ENCODE measurements at regions of chr5 and their contacts with region 1.

Region 1: DNA sequence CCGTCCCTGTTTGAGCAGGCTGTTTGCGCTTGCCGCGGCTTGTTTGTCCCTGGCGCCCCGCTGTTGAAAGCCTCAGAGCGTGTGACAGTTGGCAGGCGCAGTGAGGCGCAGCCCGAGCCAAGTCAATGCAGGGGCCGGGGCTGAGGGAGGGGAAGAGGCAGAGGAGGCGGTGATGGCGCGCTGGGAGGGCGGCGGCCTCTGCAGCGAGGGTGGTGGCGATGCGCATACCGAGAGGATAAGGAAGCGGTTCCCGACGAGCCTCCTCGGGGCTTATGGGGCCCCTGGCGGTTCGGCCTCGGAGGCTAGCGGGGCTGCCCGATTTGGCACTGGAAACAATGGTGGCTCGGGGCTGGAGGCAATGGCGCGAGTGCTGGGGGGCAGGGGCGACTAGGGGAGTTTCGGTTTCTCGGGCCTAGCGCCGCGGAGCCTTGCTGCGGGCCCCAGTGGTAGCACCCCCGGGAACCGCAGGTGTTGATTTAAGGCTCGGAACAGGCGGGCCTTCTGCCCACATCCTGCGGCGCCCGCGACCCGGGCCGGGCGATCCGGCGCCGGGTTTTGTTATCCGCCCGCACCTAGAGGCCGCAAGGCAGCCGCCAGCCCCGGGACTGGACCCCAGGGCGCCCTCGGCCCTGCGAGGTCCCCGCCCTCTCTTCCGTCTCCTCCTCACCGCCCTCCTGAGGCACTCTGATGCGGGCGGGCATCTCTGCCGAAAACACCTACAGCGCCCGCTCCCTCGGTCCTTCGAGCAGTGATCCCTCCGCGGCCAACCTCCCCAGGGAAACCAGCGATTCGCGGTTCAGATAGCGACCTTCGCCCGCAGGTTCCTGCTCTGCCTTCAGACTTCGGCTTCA is 947 bp upstream of the LNPEP start:
- DNase-seq: peak; percentile 97
- ATAC-seq: peak; percentile 69
- H3K4me3 Mint-ChIP-seq: peak overlapping the region; percentile 98
- H3K27ac Mint-ChIP-seq: peak overlapping the region; percentile 98
- H3K4me1 Mint-ChIP-seq: peaks cover 78% of the 10 kb centered on the region
- H3K27me3 Mint-ChIP-seq: no peaks in the 10 kb centered on the region
- CTCF ChIP-seq: no peak

Region 2: DNA sequence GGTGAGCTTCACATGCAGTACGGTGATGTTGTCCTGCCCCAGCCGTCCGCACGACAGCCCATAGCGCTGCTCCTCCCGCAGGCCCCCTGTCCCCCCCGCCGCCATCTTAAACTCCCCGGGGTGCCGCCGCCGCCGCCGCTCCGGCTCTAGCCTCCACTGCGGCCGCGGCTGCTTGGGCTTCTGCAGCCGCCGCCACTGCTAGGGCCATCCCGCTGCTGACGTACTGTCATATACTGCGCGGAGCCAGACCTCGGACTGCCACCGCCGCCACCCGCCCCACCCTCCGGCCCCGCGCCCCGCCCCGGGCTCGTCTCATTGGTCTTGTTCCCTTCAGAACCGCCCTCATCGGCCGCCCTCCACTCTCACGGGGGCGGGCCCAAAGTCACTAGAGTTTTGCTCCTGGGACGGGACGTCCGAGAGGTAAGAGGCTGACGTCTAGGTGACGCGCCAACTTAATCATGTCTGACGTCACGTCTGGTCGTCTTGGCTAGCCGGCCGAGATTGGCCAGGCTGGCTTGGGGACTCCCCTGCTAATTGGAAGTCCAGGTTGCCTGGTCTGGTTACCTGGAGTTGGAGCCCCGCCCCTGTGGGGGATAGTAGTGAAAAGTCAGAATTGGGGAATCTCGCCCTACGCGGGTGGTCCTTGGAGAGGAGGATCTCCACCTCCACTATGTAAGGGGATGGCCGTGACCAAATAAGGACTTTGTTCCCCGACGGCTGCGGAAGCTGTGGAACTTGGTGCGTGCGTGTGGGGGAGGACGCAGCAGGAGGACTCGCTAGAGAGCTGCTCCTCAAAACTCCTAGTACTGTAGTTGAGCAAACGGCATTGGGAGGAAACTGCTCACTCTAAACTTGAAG is 973.1 kb before region 1 on chr5 and contains the start of gene ELL2:
- CTCF ChIA-PET with region 1: no interaction called
- POLR2A ChIA-PET with region 1: no interaction called
- intact Hi-C with region 1: loop called (anchors 1 kb)
- DNase-seq: peak; percentile 92
- ATAC-seq: peak; percentile 84
- H3K4me3 Mint-ChIP-seq: peak within 1 kb of the TSS; percentile 99
- H3K27ac Mint-ChIP-seq: peak within 1 kb of the TSS; percentile 97
- H3K4me1 Mint-ChIP-seq: peaks cover 48% of the 10 kb centered on the region
- H3K27me3 Mint-ChIP-seq: no peaks in the 10 kb centered on the region
- CTCF ChIP-seq: no peak
- total RNA-seq, gene ELL2: 52.9 and 56.0 TPM in 2 replicates

Region 3: DNA sequence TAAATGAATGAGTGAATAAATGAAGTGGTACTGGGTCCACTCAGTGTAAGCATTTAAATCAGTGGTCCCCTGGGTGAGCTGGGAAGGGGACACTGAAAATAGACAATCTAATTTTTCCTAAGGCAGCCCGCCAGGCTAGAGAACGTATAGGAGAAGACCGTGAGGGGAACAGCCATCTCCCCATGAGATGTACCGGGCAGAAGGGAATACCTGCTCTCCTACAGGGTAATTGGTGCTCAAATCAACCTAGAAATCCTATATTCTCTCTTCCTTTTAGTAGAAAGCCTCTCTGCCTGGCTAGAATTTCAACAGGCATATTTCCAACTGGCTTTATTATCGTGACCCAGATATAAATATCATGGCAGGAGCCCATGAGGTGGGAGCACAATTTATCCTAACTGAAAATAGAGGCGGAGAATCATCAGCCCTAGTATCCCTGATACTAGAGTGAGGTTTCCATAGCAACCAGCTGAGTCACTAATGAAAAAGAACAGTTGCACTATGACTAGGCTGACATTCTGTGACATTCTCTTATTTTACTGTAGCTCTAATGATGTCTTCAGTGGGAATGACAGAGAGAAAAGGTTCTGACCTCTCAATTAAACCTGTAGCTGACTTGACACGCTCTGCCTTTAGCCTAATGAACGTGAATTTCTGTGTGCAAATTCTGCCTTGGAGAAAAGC is 369.2 kb before region 1 on chr5:
- CTCF ChIA-PET with region 1: no interaction called
- POLR2A ChIA-PET with region 1: no interaction called
- intact Hi-C with region 1: no loop called
- DNase-seq: no peak
- ATAC-seq: no peak
- H3K4me3 Mint-ChIP-seq: no peak overlapping the region
- H3K27ac Mint-ChIP-seq: no peak overlapping the region
- H3K4me1 Mint-ChIP-seq: peaks cover 8% of the 10 kb centered on the region
- H3K27me3 Mint-ChIP-seq: peaks cover 5% of the 10 kb centered on the region
- CTCF ChIP-seq: no peak

Region 4: DNA sequence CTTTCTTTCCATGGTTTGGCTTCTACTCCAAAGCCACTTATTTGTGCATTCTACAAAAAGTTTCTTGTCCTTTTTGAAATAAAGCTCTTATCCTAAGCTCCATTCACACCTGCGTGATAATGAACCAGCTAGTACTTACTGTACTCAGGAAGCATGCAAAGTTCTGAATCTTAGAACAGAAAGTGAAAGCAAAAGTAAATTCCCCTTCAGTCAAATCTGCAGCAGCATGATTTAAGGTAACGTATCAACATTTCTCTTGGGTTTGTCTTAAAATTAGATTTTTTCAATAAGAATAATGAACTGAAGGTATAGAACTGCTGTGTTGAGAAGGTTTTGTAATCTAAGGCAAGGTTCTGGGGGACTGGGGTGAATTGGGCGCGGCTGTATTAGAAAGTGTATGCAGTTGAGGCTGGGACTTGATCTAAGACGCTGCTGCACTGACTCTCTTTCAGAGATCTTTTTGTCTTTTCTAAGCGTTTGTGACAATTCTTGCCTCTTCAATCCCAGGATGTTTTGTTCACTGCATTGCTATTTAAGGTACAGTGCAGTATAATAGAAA is 58.6 kb before region 1 on chr5 and contains the start of gene ERAP2:
- CTCF ChIA-PET with region 1: interaction called, 35 read pairs
- POLR2A ChIA-PET with region 1: interaction called, 94 read pairs
- intact Hi-C with region 1: no loop called
- DNase-seq: no peak
- ATAC-seq: peak; percentile 53
- H3K4me3 Mint-ChIP-seq: peak within 1 kb of the TSS; percentile 98
- H3K27ac Mint-ChIP-seq: peak within 1 kb of the TSS; percentile 96
- H3K4me1 Mint-ChIP-seq: peaks cover 88% of the 10 kb centered on the region
- H3K27me3 Mint-ChIP-seq: no peaks in the 10 kb centered on the region
- CTCF ChIP-seq: no peak
- total RNA-seq, gene ERAP2: 63.1 and 80.9 TPM in 2 replicates

Region 5: GRCh38 chr5:96919754-96920197 is 15.2 kb before region 1 on chr5:
- CTCF ChIA-PET with region 1: no interaction called
- POLR2A ChIA-PET with region 1: interaction called, 6 read pairs
- intact Hi-C with region 1: loop called (anchors 1 kb)
- DNase-seq: no peak
- ATAC-seq: peak; percentile 65
- H3K4me3 Mint-ChIP-seq: no peak overlapping the region
- H3K27ac Mint-ChIP-seq: peak overlapping the region; percentile 12
- H3K4me1 Mint-ChIP-seq: peaks cover 42% of the 10 kb centered on the region
- H3K27me3 Mint-ChIP-seq: no peaks in the 10 kb centered on the region
- CTCF ChIP-seq: no peak

Region 6: DNA sequence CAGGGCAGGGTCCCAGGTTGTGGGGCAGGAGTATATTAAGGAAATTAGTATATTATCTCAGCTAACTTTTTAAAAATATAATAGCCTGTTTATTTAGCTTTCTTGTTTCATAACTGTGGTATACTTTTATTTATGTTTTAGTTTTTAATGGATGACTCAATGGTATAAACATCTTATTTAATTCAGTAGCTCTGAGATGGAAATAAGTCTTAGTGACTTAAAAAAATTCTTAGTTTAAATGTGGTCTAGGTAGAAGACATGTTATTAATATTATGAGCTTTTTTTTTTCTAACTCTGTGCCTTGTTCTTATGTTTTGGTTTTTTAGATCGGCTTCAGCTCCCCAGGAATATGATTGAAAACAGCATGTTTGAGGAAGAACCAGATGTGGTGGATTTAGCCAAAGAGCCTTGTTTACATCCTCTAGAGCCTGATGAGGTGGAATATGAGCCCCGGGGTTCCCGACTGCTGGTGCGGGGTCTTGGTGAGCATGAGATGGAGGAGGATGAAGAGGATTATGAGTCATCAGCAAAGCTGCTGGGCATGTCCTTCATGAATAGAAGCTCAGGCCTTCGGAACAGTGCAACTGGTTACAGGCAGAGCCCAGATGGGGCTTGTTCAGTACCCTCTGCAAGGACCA is 44.0 kb after region 1 on chr5:
- CTCF ChIA-PET with region 1: no interaction called
- POLR2A ChIA-PET with region 1: interaction called, 3 read pairs
- intact Hi-C with region 1: loop called (anchors 2 kb)
- DNase-seq: no peak
- ATAC-seq: no peak
- H3K4me3 Mint-ChIP-seq: no peak overlapping the region
- H3K27ac Mint-ChIP-seq: peak overlapping the region; percentile 43
- H3K4me1 Mint-ChIP-seq: peaks cover 31% of the 10 kb centered on the region
- H3K27me3 Mint-ChIP-seq: no peaks in the 10 kb centered on the region
- CTCF ChIP-seq: no peak

Region 7: DNA sequence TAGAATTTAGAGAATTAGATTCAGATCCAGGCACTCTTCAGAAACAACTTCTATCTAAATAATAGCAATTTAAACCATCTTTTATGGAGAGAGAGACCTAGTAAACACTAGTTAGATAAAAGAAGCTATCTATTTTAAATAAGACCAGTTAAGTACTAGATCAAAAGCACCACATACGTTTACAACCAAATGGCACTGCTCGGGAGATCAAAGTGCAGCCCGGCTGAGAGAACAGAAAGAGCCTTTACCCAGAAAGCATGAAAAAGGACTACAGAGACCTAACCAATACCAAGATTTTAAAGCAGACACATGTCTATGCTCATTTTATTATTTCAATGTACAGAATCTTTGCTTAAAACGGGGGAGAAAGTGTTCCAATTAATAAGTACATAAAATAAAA is 176.7 kb after region 1 on chr5:
- CTCF ChIA-PET with region 1: no interaction called
- POLR2A ChIA-PET with region 1: no interaction called
- intact Hi-C with region 1: no loop called
- DNase-seq: no peak
- ATAC-seq: no peak
- H3K4me3 Mint-ChIP-seq: no peak overlapping the region
- H3K27ac Mint-ChIP-seq: no peak overlapping the region
- H3K4me1 Mint-ChIP-seq: no peaks in the 10 kb centered on the region
- H3K27me3 Mint-ChIP-seq: no peaks in the 10 kb centered on the region
- CTCF ChIP-seq: no peak

Region 8: DNA sequence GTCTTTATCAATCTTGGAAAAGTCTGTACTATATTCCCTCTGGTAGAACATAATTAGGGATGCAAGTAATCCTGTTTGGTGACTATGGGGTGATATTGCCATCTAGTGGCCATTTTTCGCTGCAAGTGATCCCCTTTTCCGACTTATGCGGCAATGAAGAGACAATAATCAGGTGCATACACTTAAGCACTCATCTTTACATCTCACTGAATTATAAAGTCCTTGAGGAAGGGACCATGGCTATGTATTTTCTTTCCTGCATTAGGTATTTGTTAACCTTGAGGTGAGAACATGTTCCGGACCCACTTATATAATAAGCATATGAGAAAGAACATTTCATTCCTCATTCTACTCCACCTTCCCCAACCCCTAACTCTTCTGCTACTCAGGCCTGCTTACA is 227.1 kb after region 1 on chr5:
- CTCF ChIA-PET with region 1: interaction called, 5 read pairs
- POLR2A ChIA-PET with region 1: no interaction called
- intact Hi-C with region 1: loop called (anchors 1 kb)
- DNase-seq: no peak
- ATAC-seq: peak; percentile 31
- H3K4me3 Mint-ChIP-seq: no peak overlapping the region
- H3K27ac Mint-ChIP-seq: no peak overlapping the region
- H3K4me1 Mint-ChIP-seq: peaks cover 3% of the 10 kb centered on the region
- H3K27me3 Mint-ChIP-seq: no peaks in the 10 kb centered on the region
- CTCF ChIP-seq: peak; percentile 68

Region 9: GRCh38 chr5:98928873-98929696 is 1994.2 kb after region 1 on chr5 and contains the start of gene CHD1:
- CTCF ChIA-PET with region 1: no interaction called
- POLR2A ChIA-PET with region 1: interaction called, 3 read pairs
- intact Hi-C with region 1: loop called (anchors 2 kb)
- DNase-seq: peak; percentile 92
- ATAC-seq: peak; percentile 60
- H3K4me3 Mint-ChIP-seq: peak within 1 kb of the TSS; percentile 99
- H3K27ac Mint-ChIP-seq: peak within 1 kb of the TSS; percentile 100
- H3K4me1 Mint-ChIP-seq: peaks cover 71% of the 10 kb centered on the region
- H3K27me3 Mint-ChIP-seq: no peaks in the 10 kb centered on the region
- CTCF ChIP-seq: no peak
- total RNA-seq, gene CHD1: 65.2 and 77.5 TPM in 2 replicates